ENCODE measurements at regions of chr12 and their contacts with region 1.

Region 1: DNA sequence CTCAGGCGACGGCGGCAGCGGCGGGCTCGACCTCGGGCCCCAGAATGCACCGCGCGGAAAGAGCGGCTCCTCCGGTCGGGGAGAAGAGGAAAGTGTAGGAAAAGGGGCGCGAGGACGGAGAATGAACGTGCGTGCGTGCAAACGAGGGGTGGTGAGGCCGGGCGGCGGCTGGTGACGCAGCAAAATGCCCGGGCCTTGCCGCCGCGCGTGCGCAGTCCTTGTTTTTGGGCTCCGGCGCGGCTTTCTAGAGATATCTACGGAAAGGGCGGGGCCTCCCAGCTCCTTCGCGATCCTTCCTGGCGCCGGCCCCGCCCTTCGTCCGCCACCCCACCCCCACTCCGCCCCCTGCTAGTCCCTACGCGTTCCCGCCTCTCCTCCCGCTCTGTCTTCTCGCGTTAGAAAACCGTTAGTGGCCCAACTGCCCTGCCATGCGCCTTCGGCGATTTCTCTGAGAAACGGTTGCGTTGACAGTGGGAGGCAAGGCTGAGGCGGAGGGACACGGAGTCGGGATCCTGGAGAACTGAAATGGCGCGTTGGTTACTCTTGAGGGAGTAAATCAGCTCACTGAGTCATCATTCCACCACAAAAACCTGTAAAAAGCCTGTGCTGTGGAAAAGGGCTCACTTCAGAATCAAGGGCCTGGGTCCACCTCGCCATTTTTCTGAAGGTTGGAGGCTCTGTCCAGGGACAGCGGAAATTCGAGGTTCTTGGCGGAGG is at the start of gene PTGES3:
- DNase-seq: peak; percentile 99
- H3K4me3 Mint-ChIP-seq: peak within 1 kb of the TSS; percentile 89
- H3K27ac Mint-ChIP-seq: peak within 1 kb of the TSS; percentile 97
- H3K4me1 Mint-ChIP-seq: peaks cover 5% of the 10 kb centered on the region
- H3K27me3 Mint-ChIP-seq: no peaks in the 10 kb centered on the region
- CTCF ChIP-seq: no peak
- total RNA-seq, gene PTGES3: 212 and 228 TPM in 2 replicates

Region 2: DNA sequence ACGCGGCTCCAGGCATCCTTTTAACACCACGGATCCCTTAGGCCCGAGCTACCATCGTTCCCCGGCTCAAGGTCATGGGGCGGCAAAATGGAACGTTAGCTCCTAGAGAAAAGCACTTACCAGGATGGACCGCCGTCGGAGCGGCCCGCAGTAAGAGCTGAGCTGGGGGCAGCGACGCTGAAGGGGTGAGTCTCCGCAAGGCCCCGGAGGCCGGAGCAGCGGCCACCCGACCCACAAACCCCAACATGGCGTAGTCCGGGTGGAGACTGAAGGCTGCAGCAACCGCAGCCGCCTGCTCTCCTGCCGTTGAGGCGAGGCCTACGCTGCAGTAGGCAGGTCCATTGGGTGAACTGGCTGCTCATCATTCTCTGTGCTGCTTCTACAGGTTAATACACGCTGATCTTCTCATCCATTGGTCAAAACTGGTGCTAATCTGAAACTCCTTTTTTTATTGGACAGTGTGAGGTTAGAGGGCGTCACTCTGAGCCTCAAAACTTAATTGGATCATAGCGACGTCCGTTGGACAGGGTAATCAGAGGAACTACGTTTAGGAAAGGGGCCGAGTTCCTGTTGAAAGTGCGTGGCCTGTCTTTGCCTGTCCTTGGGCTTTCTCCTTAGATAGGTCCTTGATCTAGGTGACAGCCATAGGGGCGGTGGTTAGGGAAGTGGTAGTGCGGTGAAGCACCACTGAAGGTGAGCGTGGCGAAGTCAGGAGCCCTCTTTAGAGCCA is 42.4 kb before region 1 on chr12 and contains the start of gene ATP5F1B:
- CTCF ChIA-PET with region 1: interaction called, 3 read pairs
- POLR2A ChIA-PET with region 1: interaction called, 115 read pairs
- intact Hi-C with region 1: no loop called
- DNase-seq: peak; percentile 100
- H3K4me3 Mint-ChIP-seq: peak within 1 kb of the TSS; percentile 74
- H3K27ac Mint-ChIP-seq: peak within 1 kb of the TSS; percentile 93
- H3K4me1 Mint-ChIP-seq: peaks cover 9% of the 10 kb centered on the region
- H3K27me3 Mint-ChIP-seq: no peaks in the 10 kb centered on the region
- CTCF ChIP-seq: no peak
- total RNA-seq, gene ATP5F1B: 719 and 909 TPM in 2 replicates

Region 3: DNA sequence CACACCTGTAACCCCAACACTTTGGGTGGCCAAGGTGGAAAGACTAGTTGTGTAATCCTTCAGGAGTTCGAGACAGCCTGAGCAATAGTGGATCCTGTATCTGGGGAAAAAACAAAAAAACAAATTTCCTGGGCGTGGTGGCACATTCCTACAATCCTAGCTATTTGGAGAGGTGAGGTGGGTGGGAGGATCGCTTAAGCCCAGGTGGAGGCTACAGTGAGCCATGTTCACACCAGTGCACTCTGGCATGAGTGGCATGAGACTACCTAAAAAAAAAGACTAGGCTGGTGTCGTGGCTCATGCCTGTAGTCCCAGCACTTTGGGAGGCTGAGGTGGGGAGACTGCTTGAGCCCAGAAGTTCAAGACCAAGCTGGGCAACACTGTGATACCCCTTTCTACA is 17.5 kb before region 1 on chr12:
- CTCF ChIA-PET with region 1: interaction called, 5 read pairs
- POLR2A ChIA-PET with region 1: interaction called, 61 read pairs
- intact Hi-C with region 1: no loop called
- DNase-seq: no peak
- H3K4me3 Mint-ChIP-seq: no peak overlapping the region
- H3K27ac Mint-ChIP-seq: no peak overlapping the region
- H3K4me1 Mint-ChIP-seq: peaks cover 6% of the 10 kb centered on the region
- H3K27me3 Mint-ChIP-seq: no peaks in the 10 kb centered on the region
- CTCF ChIP-seq: no peak

Region 4: DNA sequence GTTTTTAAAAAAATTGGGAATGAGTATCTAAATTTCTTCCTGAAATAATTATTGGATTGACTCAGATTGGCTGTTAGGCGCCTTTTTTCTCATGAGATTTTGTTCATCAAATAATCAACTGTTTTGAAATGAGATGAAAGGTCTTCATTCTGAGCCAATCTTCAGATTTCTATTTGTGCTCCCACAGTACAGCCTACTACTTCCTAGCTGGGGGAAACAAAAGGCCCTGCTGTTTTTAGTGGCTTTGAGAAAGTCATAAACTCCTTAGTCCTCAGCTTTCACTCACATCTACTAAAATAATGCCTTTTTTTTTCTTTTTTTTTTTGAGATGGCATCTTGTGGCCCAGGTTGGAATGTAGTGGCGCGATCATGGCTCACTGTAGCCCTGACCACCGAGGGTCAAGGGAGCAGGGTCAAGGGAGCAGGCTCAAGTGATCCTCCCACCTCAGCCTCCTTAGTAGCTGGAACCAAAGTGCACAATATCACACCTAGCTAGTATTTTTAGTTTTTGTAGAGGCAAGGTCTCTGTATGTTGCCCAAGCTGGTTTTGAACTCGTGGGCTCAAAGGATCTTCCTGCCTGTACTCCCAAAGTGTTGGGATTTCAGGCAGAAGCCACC is 21.6 kb after region 1 on chr12:
- CTCF ChIA-PET with region 1: interaction called, 5 read pairs
- POLR2A ChIA-PET with region 1: interaction called, 15 read pairs
- intact Hi-C with region 1: no loop called
- DNase-seq: no peak
- H3K4me3 Mint-ChIP-seq: no peak overlapping the region
- H3K27ac Mint-ChIP-seq: no peak overlapping the region
- H3K4me1 Mint-ChIP-seq: no peaks in the 10 kb centered on the region
- H3K27me3 Mint-ChIP-seq: no peaks in the 10 kb centered on the region
- CTCF ChIP-seq: no peak

Region 5: DNA sequence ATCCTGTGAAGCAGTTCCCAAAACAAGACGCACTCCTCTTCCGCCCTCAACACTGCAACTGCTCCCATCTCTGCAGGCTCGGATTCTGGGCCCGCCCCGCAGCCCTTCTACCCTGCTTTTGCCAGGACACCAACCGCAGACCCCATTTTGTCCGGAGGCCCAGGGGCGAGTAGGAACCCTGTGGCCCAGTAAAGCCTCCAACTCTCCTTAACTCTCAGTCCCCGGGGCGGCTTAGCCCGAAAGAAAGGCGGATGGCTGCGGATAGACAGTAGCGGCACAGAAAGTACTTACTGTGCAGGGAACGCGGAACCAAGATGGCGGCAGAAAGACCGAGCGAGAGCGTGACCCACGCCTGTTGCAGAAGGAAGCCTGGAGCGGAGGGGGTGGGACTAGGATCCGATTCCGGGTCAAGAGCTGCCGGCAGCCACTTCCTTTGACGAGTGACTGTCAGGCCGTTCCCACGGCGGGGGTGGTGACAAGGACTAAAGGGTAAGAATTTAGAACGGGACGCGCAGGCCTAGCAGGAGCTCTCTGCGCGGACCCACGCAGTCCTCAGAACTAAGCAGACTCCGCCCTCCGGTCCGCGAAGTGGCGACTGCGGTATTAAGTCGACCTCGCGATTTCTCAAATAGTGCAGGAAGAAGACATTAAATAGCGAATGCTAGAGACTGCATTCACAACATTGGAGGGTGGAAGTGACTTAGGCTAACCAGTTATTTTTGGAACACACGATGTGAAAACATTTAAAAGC is 36.9 kb after region 1 on chr12 and contains the start of gene NACA:
- CTCF ChIA-PET with region 1: interaction called, 3 read pairs
- POLR2A ChIA-PET with region 1: interaction called, 137 read pairs
- intact Hi-C with region 1: loop called (anchors 1 kb)
- DNase-seq: peak; percentile 97
- H3K4me3 Mint-ChIP-seq: peak within 1 kb of the TSS; percentile 91
- H3K27ac Mint-ChIP-seq: peak within 1 kb of the TSS; percentile 97
- H3K4me1 Mint-ChIP-seq: peaks cover 28% of the 10 kb centered on the region
- H3K27me3 Mint-ChIP-seq: no peaks in the 10 kb centered on the region
- CTCF ChIP-seq: no peak
- total RNA-seq, gene NACA: 1,274 and 1,490 TPM in 2 replicates

Measured in MCF 10A (cell line).